HCT116 (cell line): ENCODE measurements at regions of chr1 and their contacts with region 1.

Region 1: DNA sequence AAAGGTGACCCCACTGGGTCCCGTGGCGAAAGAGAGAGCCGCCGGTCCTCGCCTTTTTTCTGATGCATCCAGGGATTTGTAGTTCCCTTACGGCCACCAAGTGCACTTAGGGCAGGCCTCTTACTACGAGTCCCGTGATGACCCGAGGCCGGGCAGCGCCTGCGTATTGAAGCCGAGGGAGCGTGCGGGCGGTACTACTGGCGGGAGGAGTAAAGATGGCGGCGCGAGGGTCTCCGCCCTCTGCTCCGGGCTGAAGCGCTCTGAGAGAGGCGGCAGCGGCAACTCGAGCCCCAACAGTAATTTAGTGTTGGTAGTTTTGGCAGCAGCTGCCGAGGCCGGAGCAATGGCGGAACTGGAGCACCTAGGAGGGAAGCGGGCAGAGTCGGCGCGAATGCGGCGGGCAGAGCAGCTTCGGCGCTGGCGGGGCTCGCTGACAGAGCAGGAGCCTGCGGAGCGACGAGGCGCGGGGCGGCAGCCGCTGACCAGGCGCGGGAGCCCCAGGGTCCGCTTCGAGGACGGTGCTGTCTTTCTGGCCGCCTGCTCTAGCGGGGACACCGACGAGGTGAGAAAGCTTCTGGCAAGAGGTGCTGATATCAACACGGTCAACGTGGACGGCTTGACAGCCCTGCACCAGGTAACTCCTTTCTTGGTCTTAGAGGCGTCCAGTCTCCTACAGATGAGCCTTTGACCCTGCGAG is at the start of gene PPP1R12B:
- DNase-seq: peak; percentile 98
- ATAC-seq: peak; percentile 97
- H3K4me3 ChIP-seq: peak within 1 kb of the TSS; percentile 63 to 81
- H3K27ac ChIP-seq: peak within 1 kb of the TSS; percentile 50; the same call in 1 of the 2 replicates
- H3K4me1 ChIP-seq: peaks cover 5 to 13% of the 10 kb centered on the region in 2 experiments
- H3K27me3 ChIP-seq: no peaks in the 10 kb centered on the region
- CTCF ChIP-seq: no peak
- POLR2A ChIP-seq: peak; percentile 64
- RAD21 ChIP-seq: no peak
- total RNA-seq, gene PPP1R12B: 14.3 TPM

Region 2: GRCh38 chr1:202452493-202452892 is 103.8 kb after region 1 on chr1:
- CTCF ChIA-PET with region 1: no interaction called
- POLR2A ChIA-PET with region 1: no interaction called
- RAD21 ChIA-PET with region 1: no interaction called
- intact Hi-C with region 1: loop called (anchors 10 kb)
- DNase-seq: no peak
- ATAC-seq: no peak
- H3K4me3 ChIP-seq: no peak overlapping the region
- H3K27ac ChIP-seq: no peak overlapping the region
- H3K4me1 ChIP-seq: peaks cover 12 to 19% of the 10 kb centered on the region in 2 experiments
- H3K27me3 ChIP-seq: no peaks in the 10 kb centered on the region
- CTCF ChIP-seq: no peak
- POLR2A ChIP-seq: no peak
- RAD21 ChIP-seq: no peak

Region 3: DNA sequence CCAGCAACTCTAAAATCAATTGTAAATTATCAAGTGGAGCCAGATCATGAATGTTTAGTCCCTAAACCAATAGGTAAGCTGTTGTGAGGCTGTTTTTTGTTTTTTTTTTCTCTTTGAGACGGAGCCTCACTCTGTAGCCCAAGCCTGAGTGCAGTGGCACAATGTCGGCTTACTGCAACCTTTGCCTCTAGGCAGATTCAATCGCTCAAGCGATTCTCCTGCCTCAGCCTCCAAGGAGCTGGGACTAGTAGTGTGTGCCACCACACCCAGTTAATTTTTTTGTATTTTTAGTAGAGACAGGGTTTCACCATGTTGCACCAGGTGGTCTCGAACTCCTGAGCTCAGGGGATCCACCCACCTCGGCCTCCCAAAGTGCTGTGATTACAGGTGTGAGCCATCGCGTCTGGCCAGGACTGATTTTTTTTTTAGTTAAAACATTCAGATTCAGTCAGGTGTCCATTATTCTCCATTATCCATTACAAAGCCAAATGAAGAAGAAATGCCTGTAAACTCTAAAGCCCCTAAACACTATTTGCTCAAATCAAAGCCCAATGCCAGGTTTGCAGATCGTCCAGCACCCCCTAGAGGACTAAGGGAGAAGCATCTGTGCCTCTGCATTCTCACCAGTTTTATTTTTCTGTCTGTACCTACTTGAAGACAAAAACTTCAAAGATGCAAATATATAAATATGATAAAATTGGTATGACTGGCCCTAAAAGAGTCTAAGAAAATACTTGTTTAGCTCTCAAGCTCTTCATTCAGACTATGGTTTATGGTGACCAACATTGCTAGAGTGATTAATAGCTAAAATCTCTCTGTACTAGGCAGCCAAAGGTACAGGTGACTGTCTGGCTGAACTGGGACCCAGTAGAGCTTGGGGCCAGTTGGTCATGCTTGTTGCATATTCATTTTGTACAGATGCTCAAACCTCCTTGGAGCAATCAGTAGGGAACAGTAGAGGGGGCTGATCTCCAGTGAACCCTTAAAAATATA is 223.0 kb after region 1 on chr1:
- CTCF ChIA-PET with region 1: no interaction called
- POLR2A ChIA-PET with region 1: no interaction called
- RAD21 ChIA-PET with region 1: no interaction called
- intact Hi-C with region 1: loop called (anchors 5 kb)
- DNase-seq: peak; percentile 13
- ATAC-seq: peak; percentile 73
- H3K4me3 ChIP-seq: no peak overlapping the region
- H3K27ac ChIP-seq: no peak overlapping the region
- H3K4me1 ChIP-seq: peaks cover 6 to 23% of the 10 kb centered on the region in 2 experiments; a peak in 3 of 4 replicates
- H3K27me3 ChIP-seq: no peaks in the 10 kb centered on the region
- CTCF ChIP-seq: peak; percentile 70 to 94 (median 86); a peak in 5 of 6 replicates
- POLR2A ChIP-seq: no peak
- RAD21 ChIP-seq: peak; percentile 81